Naive thymus-derived CD4-positive, alpha-beta T cell (primary cell): ENCODE measurements at regions of chr2 and their contacts with region 1.

Region 1: GRCh38 chr2:12931186-12931844 is 214.6 kb downstream of the TRIB2 start:
- DNase-seq: peak in 4 of 9 donors; percentile 17 to 33 (median 26)
- ATAC-seq: peak; percentile 63
- H3K4me3 ChIP-seq: no peak overlapping the region
- H3K4me3 Mint-ChIP-seq: no peak overlapping the region
- H3K27ac ChIP-seq: no peak overlapping the region
- H3K27ac Mint-ChIP-seq: no peak overlapping the region
- H3K4me1 ChIP-seq: no peaks in the 10 kb centered on the region
- H3K4me1 Mint-ChIP-seq: peaks cover 0 to 12% (median 7%) of the 10 kb centered on the region in 7 donors
- H3K27me3 ChIP-seq: no peaks in the 10 kb centered on the region
- H3K27me3 Mint-ChIP-seq: peaks cover 0 to 50% (median 0%) of the 10 kb centered on the region in 5 donors

Region 2: DNA sequence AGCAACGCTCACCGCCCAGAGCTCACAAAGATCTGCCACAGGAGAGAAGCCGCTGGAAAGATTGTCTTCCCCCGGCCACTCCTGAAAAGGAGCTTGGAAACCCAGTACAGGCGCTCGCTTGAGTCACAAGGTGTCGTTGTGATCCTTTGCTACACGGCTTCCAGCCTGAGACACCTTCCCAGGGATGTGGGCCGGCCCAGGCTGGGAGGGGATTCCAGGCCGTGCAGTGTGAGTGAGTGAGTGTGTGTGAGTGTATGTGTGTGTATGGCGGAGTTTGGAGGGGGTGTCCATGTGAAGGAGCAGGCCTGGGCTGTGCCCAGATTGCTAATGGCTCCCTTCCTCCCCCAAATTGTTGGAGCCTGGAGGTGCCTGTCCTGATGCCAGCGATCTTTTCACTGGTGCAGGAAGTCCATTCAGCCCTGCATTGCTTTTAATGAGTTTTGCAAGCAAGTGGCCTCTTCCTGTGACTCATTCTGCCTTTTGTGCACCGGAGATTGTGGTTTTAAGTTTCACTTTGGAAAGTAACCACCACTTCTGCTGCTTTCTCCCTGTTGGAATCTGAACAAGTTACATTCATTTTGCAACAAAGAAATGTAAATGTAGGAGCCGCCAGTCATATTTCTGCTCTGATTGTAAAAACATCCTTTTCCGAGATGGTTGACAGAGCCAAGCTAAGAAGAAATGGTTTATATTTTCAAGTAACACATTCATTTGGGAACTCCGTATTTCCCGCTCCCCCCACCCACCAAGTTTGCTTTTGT is 1101.2 kb before region 1 on chr2:
- CTCF ChIA-PET with region 1: interaction called, 13 read pairs
- POLR2A ChIA-PET with region 1: interaction called, 3 read pairs
- intact Hi-C with region 1: loop called (anchors 1 to 2 kb)
- DNase-seq: peak in 8 of 9 donors; percentile 53 to 73 (median 63)
- ATAC-seq: peak; percentile 86
- H3K4me3 ChIP-seq: peak overlapping the region; percentile 60
- H3K4me3 Mint-ChIP-seq: peak overlapping the region; percentile 80 to 97 (median 84)
- H3K27ac ChIP-seq: peak overlapping the region; percentile 46
- H3K27ac Mint-ChIP-seq: peak overlapping the region; percentile 21 to 87 (median 78)
- H3K4me1 ChIP-seq: peaks cover 20% of the 10 kb centered on the region in 2 donors
- H3K4me1 Mint-ChIP-seq: peaks cover 18 to 44% (median 33%) of the 10 kb centered on the region in 7 donors
- H3K27me3 ChIP-seq: no peaks in the 10 kb centered on the region
- H3K27me3 Mint-ChIP-seq: peaks cover 0 to 50% (median 0%) of the 10 kb centered on the region in 5 donors

Region 3: GRCh38 chr2:11955314-11955713 is 976.0 kb before region 1 on chr2:
- CTCF ChIA-PET with region 1: no interaction called
- POLR2A ChIA-PET with region 1: no interaction called
- intact Hi-C with region 1: loop called in 1 of 2 experiments (anchors 1 kb)
- DNase-seq: no peak
- ATAC-seq: no peak
- H3K4me3 ChIP-seq: no peak overlapping the region
- H3K4me3 Mint-ChIP-seq: no peak overlapping the region
- H3K27ac ChIP-seq: no peak overlapping the region
- H3K27ac Mint-ChIP-seq: peak overlapping the region in 1 of 9 donors; percentile 32
- H3K4me1 ChIP-seq: peaks cover 0 to 5% of the 10 kb centered on the region in 2 donors
- H3K4me1 Mint-ChIP-seq: peaks cover 0 to 10% (median 9%) of the 10 kb centered on the region in 7 donors
- H3K27me3 ChIP-seq: no peaks in the 10 kb centered on the region
- H3K27me3 Mint-ChIP-seq: peaks cover 0 to 41% (median 14%) of the 10 kb centered on the region in 5 donors

Region 4: GRCh38 chr2:12169721-12170120 is 761.6 kb before region 1 on chr2:
- CTCF ChIA-PET with region 1: no interaction called
- POLR2A ChIA-PET with region 1: no interaction called
- intact Hi-C with region 1: loop called in 1 of 2 experiments (anchors 1 kb)
- DNase-seq: peak in 6 of 9 donors; percentile 33 to 63 (median 47)
- ATAC-seq: peak; percentile 79
- H3K4me3 ChIP-seq: no peak overlapping the region
- H3K4me3 Mint-ChIP-seq: peak overlapping the region in 7 of 10 donors; percentile 33 to 74 (median 60)
- H3K27ac ChIP-seq: no peak overlapping the region
- H3K27ac Mint-ChIP-seq: peak overlapping the region in 7 of 9 donors; percentile 9 to 86 (median 73)
- H3K4me1 ChIP-seq: peaks cover 0 to 25% of the 10 kb centered on the region in 2 donors
- H3K4me1 Mint-ChIP-seq: peaks cover 28 to 55% (median 44%) of the 10 kb centered on the region in 7 donors
- H3K27me3 ChIP-seq: no peaks in the 10 kb centered on the region
- H3K27me3 Mint-ChIP-seq: peaks cover 0 to 3% (median 0%) of the 10 kb centered on the region in 5 donors

Region 5: GRCh38 chr2:12728221-12728777 is 203.0 kb before region 1 on chr2:
- CTCF ChIA-PET with region 1: interaction called, 14 read pairs
- POLR2A ChIA-PET with region 1: no interaction called
- intact Hi-C with region 1: no loop called
- DNase-seq: peak in 8 of 9 donors; percentile 32 to 88 (median 82)
- ATAC-seq: peak; percentile 86
- H3K4me3 ChIP-seq: peak overlapping the region; percentile 5
- H3K4me3 Mint-ChIP-seq: peak overlapping the region; percentile 63 to 92 (median 77)
- H3K27ac ChIP-seq: peak overlapping the region; percentile 40
- H3K27ac Mint-ChIP-seq: peak overlapping the region; percentile 74 to 96 (median 89)
- H3K4me1 ChIP-seq: peaks cover 38 to 68% of the 10 kb centered on the region in 2 donors
- H3K4me1 Mint-ChIP-seq: peaks cover 73 to 99% (median 94%) of the 10 kb centered on the region in 7 donors
- H3K27me3 ChIP-seq: no peaks in the 10 kb centered on the region
- H3K27me3 Mint-ChIP-seq: no peaks in the 10 kb centered on the region

Region 6: GRCh38 chr2:12856934-12857601 is 74.2 kb before region 1 on chr2:
- CTCF ChIA-PET with region 1: interaction called, 3 read pairs
- POLR2A ChIA-PET with region 1: no interaction called
- intact Hi-C with region 1: loop called (anchors 1 to 2 kb)
- DNase-seq: peak in 7 of 9 donors; percentile 46 to 81 (median 73)
- ATAC-seq: peak; percentile 91
- H3K4me3 ChIP-seq: peak overlapping the region; percentile 1
- H3K4me3 Mint-ChIP-seq: no peak overlapping the region
- H3K27ac ChIP-seq: no peak overlapping the region
- H3K27ac Mint-ChIP-seq: peak overlapping the region in 1 of 9 donors; percentile 2
- H3K4me1 ChIP-seq: peaks cover 40 to 56% of the 10 kb centered on the region in 2 donors
- H3K4me1 Mint-ChIP-seq: peaks cover 0 to 25% (median 14%) of the 10 kb centered on the region in 7 donors
- H3K27me3 ChIP-seq: no peaks in the 10 kb centered on the region
- H3K27me3 Mint-ChIP-seq: peaks cover 6 to 12% (median 10%) of the 10 kb centered on the region in 5 donors

Region 7: DNA sequence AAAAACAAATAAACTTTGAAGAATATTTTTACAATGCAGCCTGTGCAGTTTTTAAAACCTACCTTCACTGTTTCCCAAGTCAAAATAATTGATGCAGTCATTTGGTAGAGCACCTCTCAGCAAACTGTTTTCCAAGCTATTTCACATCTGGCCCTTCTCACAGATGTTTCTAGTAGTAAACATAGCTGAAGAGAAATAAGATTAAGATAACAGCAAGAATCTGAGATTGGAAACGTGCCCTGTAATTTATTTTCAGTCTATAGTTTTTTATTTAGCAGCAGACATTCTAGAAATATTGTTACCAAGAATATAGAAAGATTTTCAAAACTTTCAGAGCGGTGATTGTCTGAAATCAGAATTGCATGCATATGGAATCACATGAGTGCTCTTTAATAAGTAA is 225.6 kb after region 1 on chr2:
- CTCF ChIA-PET with region 1: no interaction called
- POLR2A ChIA-PET with region 1: no interaction called
- intact Hi-C with region 1: no loop called
- DNase-seq: no peak
- ATAC-seq: no peak
- H3K4me3 ChIP-seq: no peak overlapping the region
- H3K4me3 Mint-ChIP-seq: no peak overlapping the region
- H3K27ac ChIP-seq: no peak overlapping the region
- H3K27ac Mint-ChIP-seq: no peak overlapping the region
- H3K4me1 ChIP-seq: no peaks in the 10 kb centered on the region
- H3K4me1 Mint-ChIP-seq: no peaks in the 10 kb centered on the region
- H3K27me3 ChIP-seq: no peaks in the 10 kb centered on the region
- H3K27me3 Mint-ChIP-seq: peaks cover 0 to 45% (median 25%) of the 10 kb centered on the region in 5 donors